ENCODE measurements at regions of chr17 and their contacts with region 1.

Region 1: DNA sequence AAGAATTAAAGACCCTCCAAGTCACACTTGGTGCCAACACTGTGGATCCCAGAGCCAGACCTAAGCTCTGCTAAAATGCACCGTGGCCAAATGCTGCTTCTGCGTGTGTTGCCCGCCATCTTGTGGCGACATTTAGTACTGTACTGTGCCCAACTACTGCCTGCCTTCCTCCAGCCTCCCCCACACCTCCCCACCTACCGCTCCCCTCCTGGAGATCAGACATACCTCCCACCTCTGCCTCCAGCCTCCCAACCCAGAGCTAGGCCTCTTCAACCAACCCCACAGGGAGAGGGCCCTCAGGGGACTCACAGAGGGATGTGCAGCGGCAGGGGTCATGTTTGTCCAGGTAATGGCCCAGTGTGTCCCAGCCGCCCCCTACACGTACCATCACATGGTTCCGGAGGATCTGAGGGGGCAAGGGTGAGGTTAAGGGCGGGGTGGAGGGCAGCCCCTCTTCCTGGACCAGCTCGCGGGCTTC is 5.5 kb downstream of the GAS2L2 start:
- DNase-seq: peak; percentile 93
- H3K4me3 Mint-ChIP-seq: no peak overlapping the region
- H3K27ac Mint-ChIP-seq: no peak overlapping the region
- H3K4me1 Mint-ChIP-seq: peaks cover 18% of the 10 kb centered on the region
- H3K27me3 Mint-ChIP-seq: peaks cover 30% of the 10 kb centered on the region

Region 2: GRCh38 chr17:35141681-35142466 is 605.7 kb before region 1 on chr17 and contains the start of gene NLE1:
- intact Hi-C with region 1: loop called (anchors 10 kb)
- DNase-seq: peak; percentile 97
- H3K4me3 Mint-ChIP-seq: peak within 1 kb of the TSS; percentile 83
- H3K27ac Mint-ChIP-seq: peak within 1 kb of the TSS; percentile 81
- H3K4me1 Mint-ChIP-seq: peaks cover 17% of the 10 kb centered on the region
- H3K27me3 Mint-ChIP-seq: no peaks in the 10 kb centered on the region
- total RNA-seq, gene NLE1: 45.3 and 47.9 TPM in 2 replicates

Region 3: DNA sequence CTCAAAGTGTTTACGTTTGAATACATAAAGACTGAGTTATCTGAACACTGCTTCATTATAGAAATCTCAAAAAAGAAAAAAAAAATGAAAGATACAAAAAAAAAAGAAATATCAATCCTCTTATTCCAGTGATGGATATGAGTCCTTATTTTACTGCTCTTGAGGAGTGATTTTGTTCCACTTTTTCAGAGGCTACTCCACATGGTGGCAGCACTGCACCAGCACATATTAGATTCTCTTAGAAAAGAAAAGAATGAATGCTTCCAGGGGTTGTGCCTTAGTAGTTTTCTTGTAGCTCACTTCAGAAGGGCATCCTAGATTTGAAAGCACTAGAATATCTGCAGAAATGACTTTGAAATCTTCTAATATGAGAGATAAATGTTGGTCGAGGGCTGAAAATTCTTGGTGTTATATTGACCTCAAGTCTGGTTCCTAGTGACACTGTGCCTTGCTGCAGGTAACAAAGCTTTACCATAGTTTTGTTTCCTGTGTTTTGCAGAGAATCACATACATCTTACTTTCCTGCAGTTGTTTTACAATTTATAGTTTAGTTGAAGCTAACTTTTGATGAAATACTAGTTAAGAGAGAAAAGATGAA is 134.6 kb before region 1 on chr17:
- intact Hi-C with region 1: loop called (anchors 1 kb)
- DNase-seq: peak; percentile 79
- H3K4me3 Mint-ChIP-seq: no peak overlapping the region
- H3K27ac Mint-ChIP-seq: no peak overlapping the region
- H3K4me1 Mint-ChIP-seq: peaks cover 3% of the 10 kb centered on the region
- H3K27me3 Mint-ChIP-seq: no peaks in the 10 kb centered on the region

Measured in activated CD4-positive, alpha-beta T cell treated with anti-CD3 and anti-CD28 coated beads, Interleukin-2, amount 10 ng/mL, durations not matched to agents 24 days and 14 days (primary cell).